MCF 10A (cell line): ENCODE measurements at regions of chr5 and their contacts with region 1.

Region 1: GRCh38 chr5:79020861-79021561 is 35.9 kb upstream of the ARSB start:
- DNase-seq: peak; percentile 59
- H3K4me3 Mint-ChIP-seq: no peak overlapping the region
- H3K27ac Mint-ChIP-seq: no peak overlapping the region
- H3K4me1 Mint-ChIP-seq: peaks cover 11% of the 10 kb centered on the region
- H3K27me3 Mint-ChIP-seq: peaks cover 11% of the 10 kb centered on the region
- CTCF ChIP-seq: peak; percentile 74

Region 2: GRCh38 chr5:78984439-78985115 is 36.4 kb before region 1 on chr5:
- CTCF ChIA-PET with region 1: interaction called, 7 read pairs
- POLR2A ChIA-PET with region 1: interaction called, 5 read pairs
- intact Hi-C with region 1: loop called (anchors 1 kb)
- DNase-seq: peak; percentile 85
- H3K4me3 Mint-ChIP-seq: peak overlapping the region; percentile 83
- H3K27ac Mint-ChIP-seq: peak overlapping the region; percentile 42
- H3K4me1 Mint-ChIP-seq: peaks cover 7% of the 10 kb centered on the region
- H3K27me3 Mint-ChIP-seq: no peaks in the 10 kb centered on the region
- CTCF ChIP-seq: peak; percentile 25

Region 3: GRCh38 chr5:79042188-79042587 is 21.2 kb after region 1 on chr5:
- CTCF ChIA-PET with region 1: interaction called, 18 read pairs
- POLR2A ChIA-PET with region 1: no interaction called
- intact Hi-C with region 1: no loop called
- DNase-seq: no peak
- H3K4me3 Mint-ChIP-seq: no peak overlapping the region
- H3K27ac Mint-ChIP-seq: no peak overlapping the region
- H3K4me1 Mint-ChIP-seq: no peaks in the 10 kb centered on the region
- H3K27me3 Mint-ChIP-seq: no peaks in the 10 kb centered on the region
- CTCF ChIP-seq: no peak

Region 4: DNA sequence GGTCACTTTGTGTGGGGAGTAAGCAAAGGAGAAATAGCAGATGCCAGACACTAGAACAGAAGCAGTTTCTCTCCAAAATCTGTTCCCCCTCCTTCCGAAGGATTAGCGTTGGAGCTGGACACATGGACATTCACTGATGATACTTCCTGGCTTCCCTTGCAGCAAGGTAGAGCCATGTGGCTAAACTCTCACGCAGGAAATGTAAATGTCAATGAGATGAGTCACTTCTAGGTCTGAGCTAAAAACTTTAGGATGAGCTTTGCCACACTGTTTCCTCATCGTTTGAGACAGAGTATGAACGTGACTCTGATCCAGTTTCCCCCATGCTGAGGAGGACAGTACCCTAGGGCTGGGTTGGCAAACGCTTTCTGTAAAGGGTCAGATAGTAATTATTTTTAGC is 53.6 kb after region 1 on chr5:
- CTCF ChIA-PET with region 1: interaction called, 21 read pairs
- POLR2A ChIA-PET with region 1: interaction called, 4 read pairs
- intact Hi-C with region 1: no loop called
- DNase-seq: peak; percentile 79
- H3K4me3 Mint-ChIP-seq: no peak overlapping the region
- H3K27ac Mint-ChIP-seq: no peak overlapping the region
- H3K4me1 Mint-ChIP-seq: peaks cover 9% of the 10 kb centered on the region
- H3K27me3 Mint-ChIP-seq: no peaks in the 10 kb centered on the region
- CTCF ChIP-seq: no peak

Region 5: GRCh38 chr5:79120216-79120615 is 99.2 kb after region 1 on chr5:
- CTCF ChIA-PET with region 1: interaction called, 491 read pairs
- POLR2A ChIA-PET with region 1: interaction called, 3 read pairs
- intact Hi-C with region 1: no loop called
- DNase-seq: peak; percentile 69
- H3K4me3 Mint-ChIP-seq: no peak overlapping the region
- H3K27ac Mint-ChIP-seq: no peak overlapping the region
- H3K4me1 Mint-ChIP-seq: peaks cover 5% of the 10 kb centered on the region
- H3K27me3 Mint-ChIP-seq: no peaks in the 10 kb centered on the region
- CTCF ChIP-seq: no peak

Region 6: GRCh38 chr5:79459626-79460025 is 438.6 kb after region 1 on chr5:
- CTCF ChIA-PET with region 1: interaction called, 77 read pairs
- POLR2A ChIA-PET with region 1: interaction called, 5 read pairs
- intact Hi-C with region 1: loop called (anchors 1 kb)
- DNase-seq: no peak
- H3K4me3 Mint-ChIP-seq: no peak overlapping the region
- H3K27ac Mint-ChIP-seq: no peak overlapping the region
- H3K4me1 Mint-ChIP-seq: no peaks in the 10 kb centered on the region
- H3K27me3 Mint-ChIP-seq: no peaks in the 10 kb centered on the region
- CTCF ChIP-seq: no peak

Region 7: GRCh38 chr5:79857714-79858409 is 836.9 kb after region 1 on chr5:
- CTCF ChIA-PET with region 1: no interaction called
- POLR2A ChIA-PET with region 1: no interaction called
- intact Hi-C with region 1: loop called (anchors 5 kb)
- DNase-seq: peak; percentile 71
- H3K4me3 Mint-ChIP-seq: no peak overlapping the region
- H3K27ac Mint-ChIP-seq: no peak overlapping the region
- H3K4me1 Mint-ChIP-seq: no peaks in the 10 kb centered on the region
- H3K27me3 Mint-ChIP-seq: no peaks in the 10 kb centered on the region
- CTCF ChIP-seq: peak; percentile 80